Naive thymus-derived CD8-positive, alpha-beta T cell (primary cell): ENCODE measurements at regions of chr18 and their contacts with region 1.

Region 1: GRCh38 chr18:2606335-2606734 is 35.0 kb downstream of the NDC80 start:
- DNase-seq: peak in 4 of 10 donors; percentile 19 to 53 (median 36)
- ATAC-seq: peak; percentile 51 to 75
- H3K4me3 Mint-ChIP-seq: peak overlapping the region; percentile 8 to 80 (median 68)
- H3K27ac Mint-ChIP-seq: peak overlapping the region in 9 of 10 donors; percentile 75 to 94 (median 89)
- H3K4me1 Mint-ChIP-seq: peaks cover 15 to 55% (median 42%) of the 10 kb centered on the region in 4 donors
- H3K27me3 Mint-ChIP-seq: no peaks in the 10 kb centered on the region

Region 2: DNA sequence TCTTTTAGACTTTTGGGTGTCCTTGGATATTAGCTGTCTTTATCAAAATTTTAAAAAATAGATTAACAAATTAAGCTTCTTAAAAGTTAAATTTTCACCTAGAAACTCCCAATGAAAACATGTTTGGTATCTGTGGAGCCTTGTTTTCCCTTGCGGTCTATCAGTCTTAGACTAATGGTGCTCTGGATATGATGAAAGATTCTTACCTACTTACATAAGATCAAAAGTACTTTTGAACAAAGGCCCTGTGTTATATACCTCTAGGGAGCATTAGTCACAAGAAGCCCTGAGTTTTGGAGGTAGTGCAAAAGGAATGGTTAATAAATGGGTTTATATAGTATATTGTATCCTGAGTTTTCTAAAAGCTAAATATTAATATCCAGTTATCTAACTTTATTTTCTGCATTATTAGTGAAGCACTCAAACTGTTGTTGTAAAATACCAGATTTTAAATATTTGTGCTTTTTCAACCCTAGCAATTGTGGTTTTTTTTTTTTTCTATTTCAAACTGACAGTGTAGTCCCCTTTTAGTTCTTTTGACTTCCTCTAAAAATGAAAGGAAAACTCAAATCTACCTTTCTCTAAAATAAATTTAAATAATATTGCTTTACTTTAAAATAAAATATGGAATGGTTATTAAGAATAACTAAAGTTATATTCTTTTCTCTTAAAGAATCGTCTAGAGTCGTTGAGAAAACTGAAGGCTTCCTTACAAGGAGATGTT is 16.8 kb before region 1 on chr18:
- POLR2A ChIA-PET with region 1: interaction called, 40 read pairs
- DNase-seq: peak in 4 of 10 donors; percentile 1 to 58 (median 40)
- ATAC-seq: peak; percentile 85 to 87
- H3K4me3 Mint-ChIP-seq: peak overlapping the region; percentile 63 to 89 (median 78)
- H3K27ac Mint-ChIP-seq: peak overlapping the region; percentile 73 to 99 (median 96)
- H3K4me1 Mint-ChIP-seq: peaks cover 16 to 55% (median 46%) of the 10 kb centered on the region in 4 donors
- H3K27me3 Mint-ChIP-seq: no peaks in the 10 kb centered on the region